CD4-positive, alpha-beta T cell (primary cell): ENCODE measurements at regions of chr2 and their contacts with region 1.

Region 1: GRCh38 chr2:181457121-181457740 is at the start of gene ITGA4:
- DNase-seq: peak; percentile 77 to 94 (median 86)
- ATAC-seq: peak; percentile 84
- H3K4me3 ChIP-seq: peak within 1 kb of the TSS; percentile 91
- H3K4me3 Mint-ChIP-seq: peak within 1 kb of the TSS; percentile 93
- H3K27ac ChIP-seq: peak within 1 kb of the TSS; percentile 73 to 93
- H3K27ac Mint-ChIP-seq: peak within 1 kb of the TSS; percentile 84
- H3K4me1 ChIP-seq: peaks cover 23% of the 10 kb centered on the region
- H3K4me1 Mint-ChIP-seq: peaks cover 77% of the 10 kb centered on the region
- H3K27me3 ChIP-seq: no peaks in the 10 kb centered on the region
- H3K27me3 Mint-ChIP-seq: no peaks in the 10 kb centered on the region
- CTCF ChIP-seq: peak; percentile 81
- total RNA-seq, gene ITGA4: 79.4 to 79.5 TPM

Region 2: GRCh38 chr2:181077128-181077709 is 380.0 kb before region 1 on chr2:
- CTCF ChIA-PET with region 1: no interaction called
- POLR2A ChIA-PET with region 1: no interaction called
- intact Hi-C with region 1: loop called in 1 of 2 experiments (anchors 2 kb)
- DNase-seq: peak in 6 of 14 experiments; percentile 5 to 82 (median 42)
- ATAC-seq: peak; percentile 92
- H3K4me3 ChIP-seq: no peak overlapping the region
- H3K4me3 Mint-ChIP-seq: no peak overlapping the region
- H3K27ac ChIP-seq: no peak overlapping the region
- H3K27ac Mint-ChIP-seq: no peak overlapping the region
- H3K4me1 ChIP-seq: no peaks in the 10 kb centered on the region
- H3K4me1 Mint-ChIP-seq: no peaks in the 10 kb centered on the region
- H3K27me3 ChIP-seq: no peaks in the 10 kb centered on the region
- H3K27me3 Mint-ChIP-seq: no peaks in the 10 kb centered on the region
- CTCF ChIP-seq: peak; percentile 79

Region 3: DNA sequence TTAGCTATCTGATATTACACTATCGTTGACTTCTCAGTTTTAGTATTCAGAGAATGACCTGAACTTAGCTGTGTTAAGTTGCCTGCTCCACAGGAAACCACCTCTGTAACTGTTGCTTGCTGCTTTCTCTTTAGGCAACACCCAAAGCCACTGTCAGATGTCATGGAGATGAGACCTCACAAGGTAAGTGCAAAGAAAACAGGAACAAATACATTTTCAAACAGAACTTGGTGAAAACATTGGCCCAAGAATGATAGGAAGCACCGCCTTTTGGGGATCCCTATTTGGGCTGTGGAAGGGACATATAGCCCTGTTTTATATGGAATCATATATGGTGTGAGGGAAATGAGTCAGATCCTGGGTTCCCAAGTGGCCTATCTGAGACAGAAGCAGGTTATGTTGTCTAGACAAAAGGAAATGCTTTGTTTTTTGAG is 333.4 kb before region 1 on chr2:
- CTCF ChIA-PET with region 1: interaction called, 7 read pairs
- POLR2A ChIA-PET with region 1: interaction called, 13 read pairs
- intact Hi-C with region 1: loop called in 1 of 2 experiments (anchors 5 kb)
- DNase-seq: peak in 13 of 14 experiments; percentile 29 to 94 (median 44)
- ATAC-seq: peak; percentile 95
- H3K4me3 ChIP-seq: peak overlapping the region; percentile 35
- H3K4me3 Mint-ChIP-seq: peak overlapping the region; percentile 65
- H3K27ac ChIP-seq: peak overlapping the region; percentile 87 to 90
- H3K27ac Mint-ChIP-seq: peak overlapping the region; percentile 99
- H3K4me1 ChIP-seq: peaks cover 17% of the 10 kb centered on the region
- H3K4me1 Mint-ChIP-seq: peaks cover 74% of the 10 kb centered on the region
- H3K27me3 ChIP-seq: no peaks in the 10 kb centered on the region
- H3K27me3 Mint-ChIP-seq: no peaks in the 10 kb centered on the region
- CTCF ChIP-seq: no peak

Region 4: DNA sequence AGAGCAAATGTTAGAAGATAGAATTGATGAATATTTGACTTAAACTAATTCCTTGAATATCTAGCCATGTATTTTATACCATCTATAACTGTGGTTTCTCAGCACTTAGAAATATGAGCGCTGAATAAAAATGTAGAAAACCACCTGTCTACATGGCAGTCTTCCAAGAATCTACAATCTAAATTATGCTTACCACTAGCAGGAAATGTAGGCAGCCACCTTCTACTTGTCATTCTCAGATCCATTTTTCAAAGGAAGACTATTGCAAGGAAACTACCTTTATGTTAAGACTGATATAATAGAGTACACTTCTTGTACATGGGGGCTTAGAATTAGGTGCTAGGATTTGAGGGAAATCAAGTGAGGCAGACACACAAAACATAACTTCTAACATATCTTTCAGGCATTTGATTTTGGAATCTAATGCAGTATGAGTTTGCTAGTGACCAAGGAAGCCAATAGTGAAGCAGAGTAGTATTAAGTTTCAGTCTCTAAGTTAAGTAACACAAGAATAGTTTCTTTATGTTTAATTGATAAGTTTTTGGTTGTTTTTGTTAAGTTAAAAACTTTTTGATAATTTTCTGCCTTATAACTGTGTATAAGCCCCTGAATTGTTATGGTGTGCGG is 175.9 kb before region 1 on chr2:
- CTCF ChIA-PET with region 1: interaction called, 3 read pairs
- POLR2A ChIA-PET with region 1: interaction called, 5 read pairs
- intact Hi-C with region 1: loop called in 1 of 2 experiments (anchors 5 kb)
- DNase-seq: peak in 3 of 14 experiments; percentile 72 to 79 (median 77)
- ATAC-seq: peak; percentile 91
- H3K4me3 ChIP-seq: no peak overlapping the region
- H3K4me3 Mint-ChIP-seq: peak overlapping the region; percentile 31
- H3K27ac ChIP-seq: peak overlapping the region; percentile 43 to 63
- H3K27ac Mint-ChIP-seq: peak overlapping the region; percentile 78
- H3K4me1 ChIP-seq: peaks cover 5% of the 10 kb centered on the region
- H3K4me1 Mint-ChIP-seq: peaks cover 52% of the 10 kb centered on the region
- H3K27me3 ChIP-seq: no peaks in the 10 kb centered on the region
- H3K27me3 Mint-ChIP-seq: no peaks in the 10 kb centered on the region
- CTCF ChIP-seq: no peak

Region 5: DNA sequence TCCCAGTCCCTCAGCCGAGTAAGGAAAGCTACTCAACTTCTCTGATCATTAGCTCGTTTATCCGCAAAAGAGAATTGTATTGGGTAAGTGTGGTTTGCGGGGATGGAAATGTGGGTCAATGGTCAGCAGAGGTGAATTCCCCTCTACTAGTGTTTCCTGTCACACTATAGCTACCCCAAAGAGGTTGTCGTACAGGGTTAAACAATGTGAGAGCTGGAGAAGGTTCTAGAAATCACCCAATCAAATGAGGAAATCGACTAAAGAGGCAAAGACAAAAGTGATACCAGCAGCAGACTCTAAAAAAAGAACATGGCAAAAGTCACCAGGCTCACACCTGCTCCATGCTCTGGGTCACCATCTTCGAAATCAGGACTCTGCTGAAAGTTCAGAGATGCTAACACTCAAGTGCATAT is 144.7 kb before region 1 on chr2:
- CTCF ChIA-PET with region 1: interaction called, 11 read pairs
- POLR2A ChIA-PET with region 1: interaction called, 115 read pairs
- intact Hi-C with region 1: loop called in 1 of 2 experiments (anchors 2 kb)
- DNase-seq: peak in 7 of 14 experiments; percentile 6 to 74 (median 15)
- ATAC-seq: peak; percentile 61
- H3K4me3 ChIP-seq: no peak overlapping the region
- H3K4me3 Mint-ChIP-seq: peak overlapping the region; percentile 74
- H3K27ac ChIP-seq: peak overlapping the region; percentile 56 to 64
- H3K27ac Mint-ChIP-seq: peak overlapping the region; percentile 93
- H3K4me1 ChIP-seq: peaks cover 36% of the 10 kb centered on the region
- H3K4me1 Mint-ChIP-seq: peaks cover 60% of the 10 kb centered on the region
- H3K27me3 ChIP-seq: no peaks in the 10 kb centered on the region
- H3K27me3 Mint-ChIP-seq: no peaks in the 10 kb centered on the region
- CTCF ChIP-seq: no peak

Region 6: DNA sequence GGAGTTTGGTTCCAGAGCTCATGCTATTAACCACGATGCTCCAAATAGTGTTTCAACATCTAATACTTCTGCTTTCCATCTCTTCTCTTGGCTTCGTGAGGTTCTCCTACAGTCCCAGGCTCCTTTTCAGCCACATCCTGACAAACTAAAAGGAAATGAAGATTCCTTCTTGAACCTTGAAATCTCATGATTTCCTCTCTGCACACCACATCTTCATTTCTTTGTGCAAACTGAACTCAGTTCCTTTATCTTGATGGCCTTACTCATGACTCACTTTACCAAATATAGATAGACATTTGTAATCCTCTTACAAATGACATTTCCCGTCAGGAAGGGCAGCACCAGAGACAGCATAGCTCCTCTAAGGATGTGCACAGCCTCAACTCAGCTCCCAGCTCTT is 50.1 kb before region 1 on chr2:
- CTCF ChIA-PET with region 1: no interaction called
- POLR2A ChIA-PET with region 1: no interaction called
- intact Hi-C with region 1: no loop called
- DNase-seq: peak in 1 of 14 experiments; percentile 16
- ATAC-seq: no peak
- H3K4me3 ChIP-seq: no peak overlapping the region
- H3K4me3 Mint-ChIP-seq: no peak overlapping the region
- H3K27ac ChIP-seq: no peak overlapping the region
- H3K27ac Mint-ChIP-seq: no peak overlapping the region
- H3K4me1 ChIP-seq: no peaks in the 10 kb centered on the region
- H3K4me1 Mint-ChIP-seq: peaks cover 11% of the 10 kb centered on the region
- H3K27me3 ChIP-seq: no peaks in the 10 kb centered on the region
- H3K27me3 Mint-ChIP-seq: no peaks in the 10 kb centered on the region
- CTCF ChIP-seq: no peak

Region 7: DNA sequence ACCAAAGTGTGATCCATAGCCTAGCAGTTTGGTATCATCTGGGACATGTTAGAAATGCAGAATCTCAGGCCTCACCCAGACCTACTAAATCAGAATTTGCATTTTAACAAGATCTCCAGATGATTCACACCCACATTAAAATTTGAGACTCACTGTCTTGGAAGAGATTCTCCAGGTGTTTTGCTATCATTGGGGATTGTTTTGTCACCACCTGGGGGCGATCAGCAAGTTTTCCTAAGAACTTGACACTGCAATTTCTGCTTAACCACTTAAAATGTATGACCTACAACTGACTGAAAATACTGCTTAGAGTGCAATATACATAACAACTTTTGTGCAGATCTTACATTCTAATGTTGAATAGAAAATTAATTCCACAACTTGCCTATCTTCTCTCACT is 19.0 kb before region 1 on chr2:
- CTCF ChIA-PET with region 1: interaction called, 7 read pairs
- POLR2A ChIA-PET with region 1: interaction called, 4 read pairs
- intact Hi-C with region 1: loop called in 1 of 2 experiments (anchors 2 kb)
- DNase-seq: peak in 7 of 14 experiments; percentile 11 to 66 (median 47)
- ATAC-seq: peak; percentile 48
- H3K4me3 ChIP-seq: no peak overlapping the region
- H3K4me3 Mint-ChIP-seq: no peak overlapping the region
- H3K27ac ChIP-seq: no peak overlapping the region
- H3K27ac Mint-ChIP-seq: no peak overlapping the region
- H3K4me1 ChIP-seq: no peaks in the 10 kb centered on the region
- H3K4me1 Mint-ChIP-seq: peaks cover 16% of the 10 kb centered on the region
- H3K27me3 ChIP-seq: no peaks in the 10 kb centered on the region
- H3K27me3 Mint-ChIP-seq: no peaks in the 10 kb centered on the region
- CTCF ChIP-seq: peak; percentile 60

Region 8: GRCh38 chr2:181725476-181725875 is 268.2 kb after region 1 on chr2:
- CTCF ChIA-PET with region 1: no interaction called
- POLR2A ChIA-PET with region 1: no interaction called
- intact Hi-C with region 1: no loop called
- DNase-seq: no peak
- ATAC-seq: no peak
- H3K4me3 ChIP-seq: no peak overlapping the region
- H3K4me3 Mint-ChIP-seq: no peak overlapping the region
- H3K27ac ChIP-seq: no peak overlapping the region
- H3K27ac Mint-ChIP-seq: no peak overlapping the region
- H3K4me1 ChIP-seq: no peaks in the 10 kb centered on the region
- H3K4me1 Mint-ChIP-seq: no peaks in the 10 kb centered on the region
- H3K27me3 ChIP-seq: peaks cover 0 to 29% of the 10 kb centered on the region in 2 experiments
- H3K27me3 Mint-ChIP-seq: peaks cover 42% of the 10 kb centered on the region
- CTCF ChIP-seq: no peak

Region 9: GRCh38 chr2:181891258-181891965 is 434.2 kb after region 1 on chr2 and contains the start of gene ITPRID2:
- CTCF ChIA-PET with region 1: no interaction called
- POLR2A ChIA-PET with region 1: no interaction called
- intact Hi-C with region 1: loop called in 1 of 2 experiments (anchors 10 kb)
- DNase-seq: peak; percentile 12 to 86 (median 52)
- ATAC-seq: peak; percentile 90
- H3K4me3 ChIP-seq: peak within 1 kb of the TSS; percentile 75
- H3K4me3 Mint-ChIP-seq: peak within 1 kb of the TSS; percentile 97
- H3K27ac ChIP-seq: peak within 1 kb of the TSS in 1 of 2 donors; percentile 36
- H3K27ac Mint-ChIP-seq: peak within 1 kb of the TSS; percentile 77
- H3K4me1 ChIP-seq: peaks cover 8% of the 10 kb centered on the region
- H3K4me1 Mint-ChIP-seq: peaks cover 37% of the 10 kb centered on the region
- H3K27me3 ChIP-seq: peaks cover 4 to 15% of the 10 kb centered on the region in 2 experiments
- H3K27me3 Mint-ChIP-seq: peaks cover 25% of the 10 kb centered on the region
- CTCF ChIP-seq: no peak
- total RNA-seq, gene ITPRID2: 75.8 to 79.7 TPM